Right cardiac atrium (tissue), 5 donors: ENCODE measurements at regions of chr6 and their contacts with region 1.

Region 1: GRCh38 chr6:11232193-11232769 is at the start of gene NEDD9:
- DNase-seq: peak; percentile 96 to 98 (median 96)
- ATAC-seq: peak; percentile 98 to 99
- H3K4me3 ChIP-seq: peak within 1 kb of the TSS; percentile 75
- H3K27ac ChIP-seq: peak within 1 kb of the TSS; percentile 93
- H3K4me1 ChIP-seq: peaks cover 14% of the 10 kb centered on the region
- H3K27me3 ChIP-seq: no peaks in the 10 kb centered on the region
- total RNA-seq, gene NEDD9: 21.8 to 38.0 (median 29.1) TPM

Region 2: DNA sequence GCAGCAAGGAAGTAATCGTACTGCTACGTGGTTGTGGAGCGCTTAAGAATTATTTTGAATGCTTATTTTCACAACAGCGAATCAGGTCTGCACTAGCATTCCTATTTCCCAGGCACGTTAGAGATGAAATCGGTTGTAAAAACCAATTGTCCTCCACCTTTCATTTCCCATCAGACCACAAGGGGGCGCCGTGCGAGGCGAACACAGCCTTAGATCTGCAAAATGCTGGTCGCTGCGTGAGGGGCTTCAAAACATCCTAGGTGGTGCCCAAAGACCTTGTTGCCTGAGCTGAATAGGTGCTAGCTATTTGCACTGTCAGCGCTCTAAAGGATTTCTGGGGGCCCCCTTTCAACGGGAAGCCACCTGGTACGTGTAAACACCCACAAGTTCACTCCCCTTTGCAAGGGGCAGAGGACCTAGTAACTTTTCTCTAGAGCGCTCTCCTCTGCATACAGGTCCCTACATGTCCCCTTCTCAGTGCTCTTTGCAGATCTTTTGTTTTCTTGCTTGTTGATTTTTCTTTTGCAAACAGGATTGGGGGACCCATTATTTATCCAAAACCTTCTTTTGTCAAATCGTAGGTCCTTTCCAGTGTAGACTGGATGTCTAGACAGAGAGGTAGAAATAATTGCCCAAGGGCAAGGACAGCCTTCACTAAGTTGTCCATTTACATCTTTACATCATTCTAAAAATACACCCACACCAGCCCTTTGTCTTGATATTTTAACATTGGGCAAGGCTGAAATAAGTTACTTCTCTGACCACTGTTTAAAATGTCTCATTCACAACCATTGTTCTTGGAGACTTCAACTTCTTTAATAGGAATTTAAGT is 59.6 kb before region 1 on chr6:
- intact Hi-C with region 1: loop called in 3 of 4 experiments (anchors 5 to 10 kb)
- DNase-seq: peak; percentile 65 to 87 (median 79)
- ATAC-seq: peak; percentile 51
- H3K4me3 ChIP-seq: no peak overlapping the region
- H3K27ac ChIP-seq: no peak overlapping the region
- H3K4me1 ChIP-seq: peaks cover 5% of the 10 kb centered on the region
- H3K27me3 ChIP-seq: no peaks in the 10 kb centered on the region

Region 3: GRCh38 chr6:11353921-11354389 is 121.7 kb after region 1 on chr6:
- intact Hi-C with region 1: loop called in 1 of 4 experiments (anchors 10 kb)
- DNase-seq: peak; percentile 62 to 68 (median 63)
- ATAC-seq: peak; percentile 85 to 88
- H3K4me3 ChIP-seq: no peak overlapping the region
- H3K27ac ChIP-seq: peak overlapping the region; percentile 89
- H3K4me1 ChIP-seq: peaks cover 9% of the 10 kb centered on the region
- H3K27me3 ChIP-seq: no peaks in the 10 kb centered on the region

Region 4: GRCh38 chr6:11552442-11552841 is 320.2 kb after region 1 on chr6:
- intact Hi-C with region 1: no loop called
- DNase-seq: no peak
- ATAC-seq: no peak
- H3K4me3 ChIP-seq: no peak overlapping the region
- H3K27ac ChIP-seq: no peak overlapping the region
- H3K4me1 ChIP-seq: no peaks in the 10 kb centered on the region
- H3K27me3 ChIP-seq: no peaks in the 10 kb centered on the region